A673 (cell line): ENCODE measurements at regions of chr3 and their contacts with region 1.

Region 1: GRCh38 chr3:107643038-107643883 is 120.5 kb downstream of the BBX start:
- DNase-seq: peak; percentile 12
- H3K4me3 ChIP-seq: no peak overlapping the region
- H3K27ac ChIP-seq: no peak overlapping the region
- H3K4me1 ChIP-seq: peaks cover 8% of the 10 kb centered on the region
- H3K27me3 ChIP-seq: no peaks in the 10 kb centered on the region
- CTCF ChIP-seq: peak; percentile 45

Region 2: DNA sequence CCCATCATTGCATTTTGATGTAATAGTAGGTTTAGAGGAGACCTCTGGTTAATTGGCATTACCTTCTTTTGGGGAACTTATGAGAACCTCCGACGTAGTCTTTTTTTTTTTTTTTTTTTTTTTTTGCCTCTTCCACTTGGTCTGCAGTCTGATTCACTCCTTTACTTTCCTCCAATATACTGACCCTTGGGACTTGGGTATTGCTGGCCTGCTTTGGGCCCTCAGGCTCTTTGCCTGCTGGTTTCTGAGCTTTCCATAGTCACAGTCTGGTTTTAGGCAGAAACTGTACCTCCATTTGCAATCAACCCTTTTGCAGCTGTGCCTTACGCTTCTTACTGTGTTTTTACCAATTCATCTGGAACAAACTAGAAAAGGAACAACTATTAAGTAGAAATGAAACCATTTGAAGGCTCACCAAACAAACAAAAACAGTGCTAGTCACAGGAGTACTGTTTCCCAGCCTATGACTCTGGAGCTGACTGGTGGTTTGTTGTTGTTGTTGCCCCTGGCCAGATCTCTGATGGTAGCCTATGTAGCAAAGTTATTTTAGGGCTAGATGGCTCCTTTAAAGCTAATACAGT is 152.3 kb after region 1 on chr3:
- CTCF ChIA-PET with region 1: no interaction called
- POLR2A ChIA-PET with region 1: interaction called, 23 read pairs
- intact Hi-C with region 1: no loop called
- DNase-seq: no peak
- H3K4me3 ChIP-seq: no peak overlapping the region
- H3K27ac ChIP-seq: no peak overlapping the region
- H3K4me1 ChIP-seq: no peaks in the 10 kb centered on the region
- H3K27me3 ChIP-seq: no peaks in the 10 kb centered on the region
- CTCF ChIP-seq: no peak